GM12878 (cell line): ENCODE measurements at regions of chr10 and their contacts with region 1.

Region 1: DNA sequence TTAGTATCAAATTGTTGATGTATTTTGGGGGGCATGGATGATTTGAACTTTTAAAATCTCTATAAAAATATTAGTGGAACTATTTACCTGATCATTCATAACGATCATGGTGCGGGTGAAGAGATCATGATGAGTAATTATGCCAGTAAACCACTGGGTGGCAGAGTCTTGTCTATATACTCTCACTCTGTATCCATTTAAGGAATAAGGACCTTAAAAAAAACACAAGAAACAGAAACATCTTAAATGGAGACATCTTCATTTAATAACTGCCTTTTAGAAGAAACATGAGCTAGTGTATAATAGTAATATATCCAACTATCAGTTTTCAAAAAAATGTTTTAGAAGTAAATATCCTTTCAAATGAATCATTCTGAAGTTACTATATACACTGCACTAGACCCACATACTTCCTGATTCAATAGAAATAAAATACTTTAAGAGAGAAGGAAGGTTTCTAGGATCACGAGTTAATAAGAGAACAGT is 84.0 kb downstream of the NRBF2 start:
- DNase-seq: no peak
- ATAC-seq: peak; percentile 86
- H3K4me3 ChIP-seq: no peak overlapping the region
- H3K27ac ChIP-seq: peak overlapping the region; percentile 39; the same call in 1 of the 2 replicates
- H3K4me1 ChIP-seq: peaks cover 5% of the 10 kb centered on the region; the same call in 1 of the 2 replicates
- H3K27me3 ChIP-seq: no peaks in the 10 kb centered on the region
- CTCF ChIP-seq: peak; percentile 43 to 67 (median 47); a peak in 5 of 6 replicates
- EP300 ChIP-seq: no peak
- POLR2A ChIP-seq: no peak
- RAD21 ChIP-seq: peak; percentile 76

Region 2: GRCh38 chr10:63083904-63084689 is 133.1 kb before region 1 on chr10:
- CTCF ChIA-PET with region 1: no interaction called
- POLR2A ChIA-PET with region 1: no interaction called
- RAD21 ChIA-PET with region 1: no interaction called
- SMC1A ChIA-PET with region 1: no interaction called
- in situ Hi-C with region 1: no loop called
- intact Hi-C with region 1: no loop called
- DNase-seq: peak; percentile 38
- ATAC-seq: peak; percentile 94
- H3K4me3 ChIP-seq: no peak overlapping the region
- H3K27ac ChIP-seq: no peak overlapping the region
- H3K4me1 ChIP-seq: no peaks in the 10 kb centered on the region
- H3K27me3 ChIP-seq: no peaks in the 10 kb centered on the region; a peak in 1 of 4 replicates
- CTCF ChIP-seq: peak; percentile 63 to 84 (median 76)
- EP300 ChIP-seq: no peak
- POLR2A ChIP-seq: no peak
- RAD21 ChIP-seq: peak; percentile 99

Region 3: GRCh38 chr10:63227207-63227915 is 10.2 kb after region 1 on chr10:
- CTCF ChIA-PET with region 1: interaction called, 17 read pairs
- POLR2A ChIA-PET with region 1: interaction called, 4 read pairs
- RAD21 ChIA-PET with region 1: interaction called, 5 read pairs
- SMC1A ChIA-PET with region 1: interaction called, 5 read pairs
- in situ Hi-C with region 1: no loop called
- intact Hi-C with region 1: no loop called
- DNase-seq: no peak
- ATAC-seq: peak; percentile 79
- H3K4me3 ChIP-seq: no peak overlapping the region
- H3K27ac ChIP-seq: peak overlapping the region; percentile 66
- H3K4me1 ChIP-seq: peaks cover 27% of the 10 kb centered on the region
- H3K27me3 ChIP-seq: no peaks in the 10 kb centered on the region
- CTCF ChIP-seq: no peak
- EP300 ChIP-seq: no peak
- POLR2A ChIP-seq: no peak
- RAD21 ChIP-seq: no peak

Region 4: DNA sequence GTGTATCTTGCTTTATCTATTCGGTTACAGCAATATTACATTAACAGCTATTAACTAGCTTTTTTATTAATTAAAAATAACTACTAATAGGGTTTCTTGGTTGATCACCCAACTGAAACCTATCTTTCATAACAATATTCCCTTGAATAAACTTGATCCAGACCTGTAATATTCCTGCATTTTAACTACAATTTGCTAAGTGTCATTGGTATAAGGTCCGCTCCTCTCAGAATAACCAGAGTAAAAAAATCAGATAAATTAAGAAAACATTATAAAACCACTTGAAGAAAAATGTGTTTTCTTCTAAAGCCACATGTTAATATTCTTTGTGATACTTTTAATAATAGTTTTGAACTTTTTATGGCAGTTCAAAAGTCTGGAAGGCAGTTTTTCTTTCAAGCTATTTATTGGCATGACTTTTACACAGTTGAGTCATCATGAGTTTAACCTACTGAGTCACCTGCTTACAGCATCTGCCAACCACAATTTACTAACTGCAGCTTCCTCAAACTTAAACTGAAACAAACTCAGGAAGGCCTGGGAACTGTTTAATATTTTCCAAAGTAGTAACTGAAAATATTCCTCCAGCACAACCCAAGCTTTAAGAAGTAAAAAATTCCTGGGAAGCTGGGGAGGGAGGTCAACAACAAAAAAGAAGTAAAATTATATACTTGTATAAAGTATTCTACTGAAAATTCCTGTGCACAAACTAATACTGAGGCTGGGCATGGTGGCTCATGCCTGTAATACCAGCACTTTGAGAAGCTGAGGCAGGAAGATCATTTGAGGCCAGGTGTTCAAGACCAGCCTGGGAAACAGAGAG is 19.2 kb after region 1 on chr10:
- CTCF ChIA-PET with region 1: interaction called, 20 read pairs
- POLR2A ChIA-PET with region 1: interaction called, 3 read pairs
- RAD21 ChIA-PET with region 1: interaction called, 8 read pairs
- SMC1A ChIA-PET with region 1: interaction called, 17 read pairs
- in situ Hi-C with region 1: no loop called
- intact Hi-C with region 1: no loop called
- DNase-seq: no peak
- ATAC-seq: peak; percentile 87
- H3K4me3 ChIP-seq: no peak overlapping the region
- H3K27ac ChIP-seq: peak overlapping the region; percentile 56
- H3K4me1 ChIP-seq: peaks cover 5% of the 10 kb centered on the region; the same call in 1 of the 2 replicates
- H3K27me3 ChIP-seq: no peaks in the 10 kb centered on the region
- CTCF ChIP-seq: no peak
- EP300 ChIP-seq: peak; percentile 54 to 70; a peak in 3 of 4 replicates
- POLR2A ChIP-seq: no peak
- RAD21 ChIP-seq: no peak

Region 5: DNA sequence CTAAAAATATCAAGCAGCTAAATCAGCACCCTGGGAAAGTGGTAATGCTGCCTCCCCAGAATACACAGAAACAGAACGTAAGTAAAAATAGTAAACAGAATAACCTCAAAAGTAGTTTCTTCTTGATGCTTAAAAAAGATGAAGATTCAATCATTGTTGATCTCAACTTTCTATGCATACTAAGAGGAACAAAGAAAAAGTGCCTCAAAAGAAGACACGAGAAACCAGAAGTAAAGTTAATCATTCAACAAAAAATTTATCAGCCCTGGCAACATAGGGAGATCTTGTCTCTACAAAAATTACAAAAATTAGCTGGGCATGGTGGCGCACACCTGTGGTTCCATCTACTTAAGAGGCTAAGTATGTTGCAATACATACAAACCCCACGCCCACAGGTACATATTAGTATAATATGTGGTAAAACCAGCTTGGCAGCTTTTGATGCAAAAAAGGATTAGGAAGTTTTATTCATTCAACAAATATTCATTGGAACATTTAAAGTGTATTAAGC is 69.6 kb after region 1 on chr10:
- CTCF ChIA-PET with region 1: interaction called, 16 read pairs
- POLR2A ChIA-PET with region 1: no interaction called
- RAD21 ChIA-PET with region 1: interaction called, 6 read pairs
- SMC1A ChIA-PET with region 1: interaction called, 15 read pairs
- in situ Hi-C with region 1: no loop called
- intact Hi-C with region 1: no loop called
- DNase-seq: peak; percentile 66
- ATAC-seq: peak; percentile 83
- H3K4me3 ChIP-seq: peak overlapping the region; percentile 19; the same call in 1 of the 2 replicates
- H3K27ac ChIP-seq: peak overlapping the region; percentile 73
- H3K4me1 ChIP-seq: peaks cover 32% of the 10 kb centered on the region
- H3K27me3 ChIP-seq: no peaks in the 10 kb centered on the region
- CTCF ChIP-seq: no peak
- EP300 ChIP-seq: peak; percentile 24 to 69; a peak in 1 of 4 replicates
- POLR2A ChIP-seq: no peak
- RAD21 ChIP-seq: no peak

Region 6: DNA sequence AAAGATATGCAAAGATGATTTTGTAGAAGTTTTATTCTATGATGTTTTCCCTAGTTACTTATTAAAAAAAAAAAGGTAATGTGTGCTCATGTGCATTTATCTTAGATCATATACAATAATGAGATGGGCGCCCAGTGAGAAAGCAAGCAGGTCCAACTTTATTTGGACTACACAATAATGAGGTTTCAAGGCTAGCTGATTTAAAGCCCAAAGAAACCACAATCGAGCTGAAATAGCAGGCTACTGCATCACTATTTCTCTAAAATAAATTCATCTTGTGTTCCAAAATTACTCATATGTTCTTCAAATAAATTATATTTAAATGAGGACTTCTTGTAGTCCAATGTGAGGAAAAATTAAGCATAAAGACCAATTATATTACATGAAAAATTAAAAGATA is 138.5 kb after region 1 on chr10:
- CTCF ChIA-PET with region 1: interaction called, 4 read pairs
- POLR2A ChIA-PET with region 1: no interaction called
- RAD21 ChIA-PET with region 1: no interaction called
- SMC1A ChIA-PET with region 1: no interaction called
- in situ Hi-C with region 1: no loop called
- intact Hi-C with region 1: loop called (anchors 5 kb)
- DNase-seq: no peak
- ATAC-seq: peak; percentile 64
- H3K4me3 ChIP-seq: no peak overlapping the region
- H3K27ac ChIP-seq: peak overlapping the region; percentile 51
- H3K4me1 ChIP-seq: peaks cover 13% of the 10 kb centered on the region
- H3K27me3 ChIP-seq: no peaks in the 10 kb centered on the region
- CTCF ChIP-seq: no peak
- EP300 ChIP-seq: no peak
- POLR2A ChIP-seq: no peak
- RAD21 ChIP-seq: no peak

Region 7: DNA sequence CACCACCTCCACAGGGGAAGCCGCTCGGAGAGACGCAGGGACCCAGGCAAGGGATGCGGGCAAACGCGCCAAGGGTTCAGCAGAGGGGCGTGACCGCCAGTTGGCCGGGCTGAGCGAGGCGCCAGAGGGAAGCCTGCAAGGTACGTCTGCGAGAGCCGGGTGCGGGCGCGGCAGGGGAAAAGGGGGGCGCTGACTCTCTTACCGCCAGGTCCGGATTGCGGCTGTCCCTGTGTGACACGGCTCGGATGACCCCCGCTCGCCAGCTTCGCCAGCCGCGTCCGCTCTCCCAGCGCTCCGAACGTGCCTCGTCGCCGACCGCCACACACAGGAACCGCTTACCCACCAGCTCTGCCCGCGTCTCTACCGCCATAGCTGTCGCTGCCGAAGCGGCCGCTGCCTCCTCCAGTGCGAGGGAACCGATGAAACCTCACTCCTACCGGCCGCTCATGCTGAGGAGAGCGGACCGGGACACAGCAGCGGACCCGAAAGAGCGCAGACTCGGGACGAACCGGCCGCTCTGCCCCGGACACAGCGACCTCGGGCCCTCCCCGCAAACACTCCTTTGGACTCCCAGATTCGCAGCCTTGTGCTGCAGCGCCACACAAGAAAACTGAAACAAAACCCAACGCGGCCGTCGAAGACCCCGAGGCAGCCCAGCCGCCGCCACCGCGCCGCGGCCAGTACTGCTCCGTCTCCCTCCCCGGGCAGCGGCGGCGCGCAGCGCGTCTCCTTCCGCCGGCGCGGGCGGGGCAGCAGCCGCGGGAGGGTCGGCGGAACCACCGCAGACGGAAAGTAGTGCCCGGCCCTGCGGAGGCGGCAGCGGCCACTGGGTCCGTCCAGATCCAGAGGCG is 248.4 kb after region 1 on chr10 and contains the start of gene JMJD1C:
- CTCF ChIA-PET with region 1: interaction called, 8 read pairs
- POLR2A ChIA-PET with region 1: interaction called, 3 read pairs
- RAD21 ChIA-PET with region 1: interaction called, 15 read pairs
- SMC1A ChIA-PET with region 1: interaction called, 4 read pairs
- in situ Hi-C with region 1: no loop called
- intact Hi-C with region 1: loop called (anchors 5 kb)
- DNase-seq: no peak
- ATAC-seq: peak; percentile 85
- H3K4me3 ChIP-seq: peak within 1 kb of the TSS; percentile 87
- H3K27ac ChIP-seq: peak within 1 kb of the TSS; percentile 77
- H3K4me1 ChIP-seq: peaks cover 3% of the 10 kb centered on the region; the same call in 1 of the 2 replicates
- H3K27me3 ChIP-seq: no peaks in the 10 kb centered on the region
- CTCF ChIP-seq: 0 out of 6 replicates have a peak, but pooled peaks of 1 of the 3 experiments have one; percentile 9
- EP300 ChIP-seq: no peak
- POLR2A ChIP-seq: peak; percentile 91
- RAD21 ChIP-seq: 0 out of 2 replicates have a peak, but pooled peaks have one; percentile 20
- polyA plus RNA-seq, gene JMJD1C: 31.2 to 42.6 TPM